Activated CD4-positive, alpha-beta memory T cell treated with anti-CD3 and anti-CD28 coated beads for 36 hours (primary cell): ENCODE measurements at regions of chr2 and their contacts with region 1.

Region 1: GRCh38 chr2:215435809-215436704 is at the start of gene FN1:
- DNase-seq: peak; percentile 69
- H3K4me3 Mint-ChIP-seq: peak within 1 kb of the TSS; percentile 72
- H3K27ac Mint-ChIP-seq: no peak within 1 kb of the TSS
- H3K4me1 Mint-ChIP-seq: peaks cover 15% of the 10 kb centered on the region
- H3K27me3 Mint-ChIP-seq: peaks cover 55% of the 10 kb centered on the region
- total RNA-seq, gene FN1: 0.50 to 0.53 TPM

Region 2: GRCh38 chr2:215920244-215921100 is 484.4 kb after region 1 on chr2:
- CTCF ChIA-PET with region 1: no interaction called
- POLR2A ChIA-PET with region 1: no interaction called
- intact Hi-C with region 1: loop called (anchors 5 kb)
- DNase-seq: peak; percentile 69
- H3K4me3 Mint-ChIP-seq: no peak overlapping the region
- H3K27ac Mint-ChIP-seq: no peak overlapping the region
- H3K4me1 Mint-ChIP-seq: no peaks in the 10 kb centered on the region
- H3K27me3 Mint-ChIP-seq: peaks cover under 1% of the 10 kb centered on the region